Activated CD4-positive, alpha-beta T cell treated with anti-CD3 and anti-CD28 coated beads for 36 hours (primary cell): ENCODE measurements at regions of chr12 and their contacts with region 1.

Region 1: GRCh38 chr12:25524407-25524806 is 28.7 kb downstream of the LMNTD1 start:
- DNase-seq: no peak
- ATAC-seq: no peak
- H3K4me3 Mint-ChIP-seq: no peak overlapping the region
- H3K27ac Mint-ChIP-seq: no peak overlapping the region
- H3K4me1 Mint-ChIP-seq: no peaks in the 10 kb centered on the region
- H3K27me3 Mint-ChIP-seq: no peaks in the 10 kb centered on the region

Region 2: GRCh38 chr12:25469861-25470260 is 54.5 kb before region 1 on chr12:
- CTCF ChIA-PET with region 1: no interaction called
- POLR2A ChIA-PET with region 1: no interaction called
- intact Hi-C with region 1: loop called in 1 of 2 experiments (anchors 5 kb)
- DNase-seq: no peak
- ATAC-seq: no peak
- H3K4me3 Mint-ChIP-seq: no peak overlapping the region
- H3K27ac Mint-ChIP-seq: no peak overlapping the region
- H3K4me1 Mint-ChIP-seq: no peaks in the 10 kb centered on the region
- H3K27me3 Mint-ChIP-seq: no peaks in the 10 kb centered on the region